ENCODE measurements at regions of chr9 and their contacts with region 1.

Region 1: GRCh38 chr9:98775831-98776441 is 20.4 kb downstream of the ANKS6 start:
- DNase-seq: peak; percentile 74
- ATAC-seq: peak; percentile 83
- H3K4me3 Mint-ChIP-seq: no peak overlapping the region
- H3K27ac Mint-ChIP-seq: no peak overlapping the region
- H3K4me1 Mint-ChIP-seq: peaks cover 2% of the 10 kb centered on the region; the same call in 1 of the 2 replicates
- H3K27me3 Mint-ChIP-seq: no peaks in the 10 kb centered on the region
- CTCF ChIP-seq: peak; percentile 47

Region 2: DNA sequence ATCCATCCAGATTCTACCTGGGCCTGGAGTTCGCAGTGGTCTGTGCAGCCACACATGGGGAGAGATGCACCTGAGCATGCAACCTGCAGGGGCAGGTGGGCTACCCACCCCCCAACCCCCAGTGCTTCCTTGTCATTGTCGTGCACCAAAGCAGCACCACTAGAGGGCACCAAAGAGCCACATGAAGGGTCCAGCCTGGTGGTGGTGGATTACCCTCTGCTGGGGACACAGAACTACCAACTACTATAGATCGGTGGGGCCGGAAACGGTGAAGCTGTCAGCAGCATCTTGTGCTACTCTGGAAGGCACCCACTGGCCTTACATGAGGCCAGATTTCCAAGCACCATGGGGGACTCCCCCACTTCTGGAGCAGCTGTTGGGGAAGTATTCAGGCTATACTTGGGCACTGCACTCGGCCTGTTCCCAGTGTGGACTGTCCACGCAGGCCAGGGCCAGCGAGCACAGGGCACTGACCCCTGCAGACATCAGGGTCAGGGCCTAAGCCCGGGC is 460.3 kb before region 1 on chr9:
- CTCF ChIA-PET with region 1: interaction called, 11 read pairs
- POLR2A ChIA-PET with region 1: interaction called, 3 read pairs
- DNase-seq: peak; percentile 96
- ATAC-seq: peak; percentile 96
- H3K4me3 Mint-ChIP-seq: no peak overlapping the region
- H3K27ac Mint-ChIP-seq: no peak overlapping the region
- H3K4me1 Mint-ChIP-seq: peaks cover 18% of the 10 kb centered on the region
- H3K27me3 Mint-ChIP-seq: no peaks in the 10 kb centered on the region
- CTCF ChIP-seq: peak; percentile 86

Region 3: GRCh38 chr9:98760231-98760630 is 15.7 kb before region 1 on chr9:
- CTCF ChIA-PET with region 1: interaction called, 17 read pairs
- POLR2A ChIA-PET with region 1: no interaction called
- DNase-seq: no peak
- ATAC-seq: no peak
- H3K4me3 Mint-ChIP-seq: no peak overlapping the region
- H3K27ac Mint-ChIP-seq: no peak overlapping the region
- H3K4me1 Mint-ChIP-seq: no peaks in the 10 kb centered on the region
- H3K27me3 Mint-ChIP-seq: no peaks in the 10 kb centered on the region
- CTCF ChIP-seq: no peak

Region 4: GRCh38 chr9:98791147-98792095 is 15.5 kb after region 1 on chr9:
- CTCF ChIA-PET with region 1: interaction called, 21 read pairs
- POLR2A ChIA-PET with region 1: no interaction called
- DNase-seq: peak; percentile 86
- ATAC-seq: peak; percentile 88
- H3K4me3 Mint-ChIP-seq: no peak overlapping the region
- H3K27ac Mint-ChIP-seq: peak overlapping the region; percentile 82
- H3K4me1 Mint-ChIP-seq: peaks cover 45% of the 10 kb centered on the region
- H3K27me3 Mint-ChIP-seq: no peaks in the 10 kb centered on the region
- CTCF ChIP-seq: peak; percentile 100

Measured in WTC11 (cell line).